HepG2 (cell line): ENCODE measurements at regions of chr7 and their contacts with region 1.

Region 1: DNA sequence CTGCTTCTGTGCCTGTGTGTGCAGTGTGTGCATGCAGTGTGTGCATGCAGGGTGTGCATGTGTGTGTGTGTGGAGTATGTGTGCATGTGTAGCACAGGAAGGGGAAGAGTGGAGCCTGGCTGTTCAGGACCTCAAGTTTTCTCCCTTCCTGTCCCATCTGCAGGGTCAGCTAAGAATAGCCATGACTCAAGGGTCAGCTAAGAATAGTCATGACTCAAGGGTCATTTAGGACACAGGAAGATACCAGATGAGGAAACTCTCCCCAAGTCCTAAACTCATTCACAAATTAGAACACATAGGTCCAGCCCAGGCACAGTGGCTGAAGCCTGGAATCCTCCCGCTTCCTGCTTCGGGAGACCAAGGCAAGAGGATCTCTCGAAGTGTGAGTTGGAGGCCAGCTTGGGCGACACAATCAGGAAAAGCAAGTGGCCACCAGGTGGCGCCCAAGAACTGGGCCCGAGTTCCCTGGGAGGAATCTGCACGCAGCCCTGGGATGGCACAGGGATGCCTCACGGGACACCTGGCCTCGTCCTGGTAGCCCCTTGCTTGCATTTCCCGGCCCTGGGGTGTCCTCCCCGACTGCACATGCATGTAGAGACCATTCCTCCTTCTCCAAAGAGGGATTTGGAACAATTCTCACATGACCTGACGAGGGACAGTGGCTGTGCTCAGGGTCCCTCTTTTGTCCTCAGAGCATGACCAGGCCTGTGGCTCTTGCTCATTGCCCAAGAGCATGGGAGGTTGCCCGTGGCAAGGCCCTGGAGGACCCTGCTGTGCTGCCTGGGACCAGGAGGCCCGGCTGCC is 21.4 kb upstream of the VOPP1 start:
- DNase-seq: peak; percentile 38
- ATAC-seq: peak; percentile 85
- H3K4me3 ChIP-seq: no peak overlapping the region
- H3K27ac ChIP-seq: no peak overlapping the region
- H3K4me1 ChIP-seq: peaks cover 6% of the 10 kb centered on the region; the same call in 1 of the 2 replicates
- H3K27me3 ChIP-seq: peaks cover 0 to 10% of the 10 kb centered on the region in 2 experiments; a peak in 2 of 5 replicates
- CTCF ChIP-seq: peak; percentile 91
- EP300 ChIP-seq: no peak
- POLR2A ChIP-seq: no peak
- RAD21 ChIP-seq: peak; percentile 59; the same call in 1 of the 2 replicates

Region 2: DNA sequence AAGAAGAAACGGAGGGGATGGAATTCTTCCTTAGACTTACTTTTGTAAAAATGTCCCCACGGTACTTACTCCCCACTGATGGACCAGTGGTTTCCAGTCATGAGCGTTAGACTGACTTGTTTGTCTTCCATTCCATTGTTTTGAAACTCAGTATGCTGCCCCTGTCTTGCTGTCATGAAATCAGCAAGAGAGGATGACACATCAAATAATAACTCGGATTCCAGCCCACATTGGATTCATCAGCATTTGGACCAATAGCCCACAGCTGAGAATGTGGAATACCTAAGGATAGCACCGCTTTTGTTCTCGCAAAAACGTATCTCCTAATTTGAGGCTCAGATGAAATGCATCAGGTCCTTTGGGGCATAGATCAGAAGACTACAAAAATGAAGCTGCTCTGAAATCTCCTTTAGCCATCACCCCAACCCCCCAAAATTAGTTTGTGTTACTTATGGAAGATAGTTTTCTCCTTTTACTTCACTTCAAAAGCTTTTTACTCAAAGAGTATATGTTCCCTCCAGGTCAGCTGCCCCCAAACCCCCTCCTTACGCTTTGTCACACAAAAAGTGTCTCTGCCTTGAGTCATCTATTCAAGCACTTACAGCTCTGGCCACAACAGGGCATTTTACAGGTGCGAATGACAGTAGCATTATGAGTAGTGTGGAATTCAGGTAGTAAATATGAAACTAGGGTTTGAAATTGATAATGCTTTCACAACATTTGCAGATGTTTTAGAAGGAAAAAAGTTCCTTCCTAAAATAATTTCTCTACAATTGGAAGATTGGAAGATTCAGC is 387.3 kb before region 1 on chr7:
- CTCF ChIA-PET with region 1: no interaction called
- POLR2A ChIA-PET with region 1: no interaction called
- in situ Hi-C with region 1: no loop called
- intact Hi-C with region 1: no loop called
- DNase-seq: no peak
- ATAC-seq: no peak
- H3K4me3 ChIP-seq: no peak overlapping the region
- H3K27ac ChIP-seq: no peak overlapping the region
- H3K4me1 ChIP-seq: peaks cover 11% of the 10 kb centered on the region; the same call in 1 of the 2 replicates
- H3K27me3 ChIP-seq: no peaks in the 10 kb centered on the region
- CTCF ChIP-seq: no peak
- EP300 ChIP-seq: no peak
- POLR2A ChIP-seq: no peak
- RAD21 ChIP-seq: no peak

Region 3: GRCh38 chr7:55271069-55271626 is 322.6 kb before region 1 on chr7:
- CTCF ChIA-PET with region 1: no interaction called
- POLR2A ChIA-PET with region 1: no interaction called
- in situ Hi-C with region 1: loop called (anchors 10 kb)
- intact Hi-C with region 1: no loop called
- DNase-seq: no peak
- ATAC-seq: peak; percentile 56
- H3K4me3 ChIP-seq: no peak overlapping the region
- H3K27ac ChIP-seq: no peak overlapping the region
- H3K4me1 ChIP-seq: no peaks in the 10 kb centered on the region
- H3K27me3 ChIP-seq: peaks cover 3 to 55% of the 10 kb centered on the region in 2 experiments; a peak in 4 of 5 replicates
- CTCF ChIP-seq: peak; percentile 19; the same call in 1 of the 2 replicates
- EP300 ChIP-seq: no peak
- POLR2A ChIP-seq: no peak
- RAD21 ChIP-seq: no peak

Region 4: GRCh38 chr7:55288070-55288824 is 305.5 kb before region 1 on chr7:
- CTCF ChIA-PET with region 1: no interaction called
- POLR2A ChIA-PET with region 1: no interaction called
- in situ Hi-C with region 1: no loop called
- intact Hi-C with region 1: no loop called
- DNase-seq: no peak
- ATAC-seq: no peak
- H3K4me3 ChIP-seq: no peak overlapping the region
- H3K27ac ChIP-seq: no peak overlapping the region
- H3K4me1 ChIP-seq: no peaks in the 10 kb centered on the region
- H3K27me3 ChIP-seq: no peaks in the 10 kb centered on the region; a peak in 1 of 5 replicates
- CTCF ChIP-seq: no peak
- EP300 ChIP-seq: no peak
- POLR2A ChIP-seq: no peak
- RAD21 ChIP-seq: no peak

Region 5: GRCh38 chr7:55432939-55433784 is 160.6 kb before region 1 on chr7:
- CTCF ChIA-PET with region 1: interaction called, 3 read pairs
- POLR2A ChIA-PET with region 1: no interaction called
- in situ Hi-C with region 1: loop called (anchors 10 kb)
- intact Hi-C with region 1: no loop called
- DNase-seq: peak; percentile 50
- ATAC-seq: peak; percentile 84
- H3K4me3 ChIP-seq: no peak overlapping the region
- H3K27ac ChIP-seq: no peak overlapping the region
- H3K4me1 ChIP-seq: peaks cover 6% of the 10 kb centered on the region; the same call in 1 of the 2 replicates
- H3K27me3 ChIP-seq: no peaks in the 10 kb centered on the region
- CTCF ChIP-seq: peak; percentile 56
- EP300 ChIP-seq: no peak
- POLR2A ChIP-seq: no peak
- RAD21 ChIP-seq: peak; percentile 54

Region 6: GRCh38 chr7:55570218-55570873 is 23.4 kb before region 1 on chr7:
- CTCF ChIA-PET with region 1: no interaction called
- POLR2A ChIA-PET with region 1: no interaction called
- in situ Hi-C with region 1: no loop called
- intact Hi-C with region 1: no loop called
- DNase-seq: no peak
- ATAC-seq: no peak
- H3K4me3 ChIP-seq: 0 out of 6 replicates have a peak overlapping the region, but pooled peaks of 1 of the 3 experiments have one; percentile 84
- H3K27ac ChIP-seq: no peak overlapping the region
- H3K4me1 ChIP-seq: peaks cover 64% of the 10 kb centered on the region
- H3K27me3 ChIP-seq: no peaks in the 10 kb centered on the region; a peak in 1 of 5 replicates
- CTCF ChIP-seq: no peak
- EP300 ChIP-seq: no peak
- POLR2A ChIP-seq: no peak
- RAD21 ChIP-seq: no peak